Caco-2 (cell line): ENCODE measurements at regions of chr3 and their contacts with region 1.

Region 1: GRCh38 chr3:169668957-169669681 is 5.6 kb upstream of the MECOM start:
- DNase-seq: peak; percentile 67 to 80
- H3K4me3 ChIP-seq: peak overlapping the region; percentile 51
- H3K4me3 Mint-ChIP-seq: peak overlapping the region; percentile 74
- H3K27ac Mint-ChIP-seq: no peak overlapping the region
- H3K4me1 ChIP-seq: no peaks in the 10 kb centered on the region
- H3K4me1 Mint-ChIP-seq: peaks cover 7% of the 10 kb centered on the region
- H3K27me3 ChIP-seq: peaks cover 1% of the 10 kb centered on the region
- H3K27me3 Mint-ChIP-seq: peaks cover 22% of the 10 kb centered on the region
- CTCF ChIP-seq: peak; percentile 77 to 91

Region 2: GRCh38 chr3:168952551-168952950 is 716.6 kb before region 1 on chr3:
- CTCF ChIA-PET with region 1: no interaction called
- POLR2A ChIA-PET with region 1: no interaction called
- intact Hi-C with region 1: loop called (anchors 10 kb)
- DNase-seq: no peak
- H3K4me3 ChIP-seq: no peak overlapping the region
- H3K4me3 Mint-ChIP-seq: no peak overlapping the region
- H3K27ac Mint-ChIP-seq: no peak overlapping the region
- H3K4me1 ChIP-seq: peaks cover 14% of the 10 kb centered on the region
- H3K4me1 Mint-ChIP-seq: peaks cover 8% of the 10 kb centered on the region
- H3K27me3 ChIP-seq: no peaks in the 10 kb centered on the region
- H3K27me3 Mint-ChIP-seq: no peaks in the 10 kb centered on the region
- CTCF ChIP-seq: no peak

Region 3: DNA sequence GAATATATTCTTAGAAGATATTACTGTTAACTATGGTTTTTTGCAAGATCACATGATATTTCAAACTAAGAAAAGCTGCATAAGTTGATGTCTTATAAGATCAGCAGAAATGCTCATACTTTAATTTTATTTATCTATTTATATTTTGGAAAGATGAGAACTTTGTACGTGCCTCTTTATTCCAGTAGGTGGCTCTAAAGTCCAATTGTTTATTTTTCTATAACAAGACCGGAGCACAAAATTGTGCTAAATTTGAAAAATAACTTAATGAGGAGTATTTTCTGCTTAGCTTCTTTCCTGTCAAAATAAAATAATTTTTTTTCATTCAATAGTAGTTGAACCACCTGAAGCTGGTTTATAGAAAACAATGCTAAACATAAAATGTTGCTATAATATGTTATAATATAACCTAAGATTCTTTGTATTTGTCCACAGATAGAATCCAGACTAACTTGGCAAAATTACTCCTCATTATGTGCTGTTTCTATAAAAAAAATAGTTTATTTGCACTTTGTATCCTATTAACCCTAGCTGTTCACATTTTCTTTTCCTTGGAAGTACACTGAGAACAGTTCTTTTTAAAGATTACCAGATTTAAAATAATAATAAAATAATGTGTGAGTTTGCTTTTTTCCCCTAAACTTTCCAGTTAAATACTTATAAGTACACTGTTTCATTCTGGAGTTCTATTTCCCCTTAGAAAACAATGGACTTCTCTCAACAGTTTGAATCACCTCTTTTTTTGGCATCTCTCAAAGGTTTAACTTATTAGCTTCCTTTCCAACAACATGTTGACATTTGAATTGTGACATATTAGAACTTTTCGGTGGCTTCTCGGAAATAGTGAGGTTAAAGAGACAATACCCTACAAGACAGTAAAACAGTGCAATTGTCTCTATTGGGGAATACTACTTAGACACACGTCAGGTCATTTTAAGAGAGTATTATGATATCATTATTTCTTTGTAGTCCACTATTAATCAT is 535.6 kb before region 1 on chr3:
- CTCF ChIA-PET with region 1: interaction called, 3 read pairs
- POLR2A ChIA-PET with region 1: no interaction called
- intact Hi-C with region 1: loop called (anchors 1 kb)
- DNase-seq: no peak
- H3K4me3 ChIP-seq: no peak overlapping the region
- H3K4me3 Mint-ChIP-seq: no peak overlapping the region
- H3K27ac Mint-ChIP-seq: no peak overlapping the region
- H3K4me1 ChIP-seq: peaks cover 4% of the 10 kb centered on the region; the same call in 1 of the 2 replicates
- H3K4me1 Mint-ChIP-seq: no peaks in the 10 kb centered on the region
- H3K27me3 ChIP-seq: no peaks in the 10 kb centered on the region
- H3K27me3 Mint-ChIP-seq: no peaks in the 10 kb centered on the region
- CTCF ChIP-seq: peak; percentile 8 to 24

Region 4: DNA sequence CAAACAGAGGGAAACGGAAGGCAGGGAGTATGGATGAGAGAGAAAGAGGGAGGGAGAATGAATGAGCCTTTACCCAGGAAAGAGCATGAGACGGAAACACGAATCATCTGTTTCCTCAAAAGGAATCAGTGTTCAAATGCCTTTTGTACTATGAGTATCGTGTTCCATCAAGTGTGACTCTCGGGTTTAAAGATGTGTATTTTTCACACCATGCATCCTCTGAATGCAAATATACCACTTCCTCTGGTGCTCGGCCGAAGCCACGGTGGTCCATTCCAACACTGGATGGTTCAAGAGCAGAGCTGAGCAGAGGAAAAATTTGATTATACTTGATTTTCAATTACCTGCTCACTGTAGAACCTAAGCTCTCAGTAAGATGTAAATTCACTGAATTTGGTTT is 510.7 kb before region 1 on chr3:
- CTCF ChIA-PET with region 1: no interaction called
- POLR2A ChIA-PET with region 1: no interaction called
- intact Hi-C with region 1: no loop called
- DNase-seq: no peak
- H3K4me3 ChIP-seq: no peak overlapping the region
- H3K4me3 Mint-ChIP-seq: no peak overlapping the region
- H3K27ac Mint-ChIP-seq: no peak overlapping the region
- H3K4me1 ChIP-seq: no peaks in the 10 kb centered on the region
- H3K4me1 Mint-ChIP-seq: no peaks in the 10 kb centered on the region
- H3K27me3 ChIP-seq: no peaks in the 10 kb centered on the region
- H3K27me3 Mint-ChIP-seq: no peaks in the 10 kb centered on the region
- CTCF ChIP-seq: no peak

Region 5: GRCh38 chr3:169286214-169286613 is 382.9 kb before region 1 on chr3:
- CTCF ChIA-PET with region 1: no interaction called
- POLR2A ChIA-PET with region 1: no interaction called
- intact Hi-C with region 1: loop called (anchors 5 kb)
- DNase-seq: no peak
- H3K4me3 ChIP-seq: no peak overlapping the region
- H3K4me3 Mint-ChIP-seq: no peak overlapping the region
- H3K27ac Mint-ChIP-seq: no peak overlapping the region
- H3K4me1 ChIP-seq: peaks cover 24% of the 10 kb centered on the region
- H3K4me1 Mint-ChIP-seq: peaks cover 26% of the 10 kb centered on the region
- H3K27me3 ChIP-seq: no peaks in the 10 kb centered on the region
- H3K27me3 Mint-ChIP-seq: no peaks in the 10 kb centered on the region
- CTCF ChIP-seq: no peak

Region 6: GRCh38 chr3:169526246-169526645 is 142.9 kb before region 1 on chr3:
- CTCF ChIA-PET with region 1: no interaction called
- POLR2A ChIA-PET with region 1: no interaction called
- intact Hi-C with region 1: no loop called
- DNase-seq: no peak
- H3K4me3 ChIP-seq: no peak overlapping the region
- H3K4me3 Mint-ChIP-seq: no peak overlapping the region
- H3K27ac Mint-ChIP-seq: no peak overlapping the region
- H3K4me1 ChIP-seq: no peaks in the 10 kb centered on the region
- H3K4me1 Mint-ChIP-seq: no peaks in the 10 kb centered on the region
- H3K27me3 ChIP-seq: no peaks in the 10 kb centered on the region
- H3K27me3 Mint-ChIP-seq: no peaks in the 10 kb centered on the region
- CTCF ChIP-seq: no peak

Region 7: DNA sequence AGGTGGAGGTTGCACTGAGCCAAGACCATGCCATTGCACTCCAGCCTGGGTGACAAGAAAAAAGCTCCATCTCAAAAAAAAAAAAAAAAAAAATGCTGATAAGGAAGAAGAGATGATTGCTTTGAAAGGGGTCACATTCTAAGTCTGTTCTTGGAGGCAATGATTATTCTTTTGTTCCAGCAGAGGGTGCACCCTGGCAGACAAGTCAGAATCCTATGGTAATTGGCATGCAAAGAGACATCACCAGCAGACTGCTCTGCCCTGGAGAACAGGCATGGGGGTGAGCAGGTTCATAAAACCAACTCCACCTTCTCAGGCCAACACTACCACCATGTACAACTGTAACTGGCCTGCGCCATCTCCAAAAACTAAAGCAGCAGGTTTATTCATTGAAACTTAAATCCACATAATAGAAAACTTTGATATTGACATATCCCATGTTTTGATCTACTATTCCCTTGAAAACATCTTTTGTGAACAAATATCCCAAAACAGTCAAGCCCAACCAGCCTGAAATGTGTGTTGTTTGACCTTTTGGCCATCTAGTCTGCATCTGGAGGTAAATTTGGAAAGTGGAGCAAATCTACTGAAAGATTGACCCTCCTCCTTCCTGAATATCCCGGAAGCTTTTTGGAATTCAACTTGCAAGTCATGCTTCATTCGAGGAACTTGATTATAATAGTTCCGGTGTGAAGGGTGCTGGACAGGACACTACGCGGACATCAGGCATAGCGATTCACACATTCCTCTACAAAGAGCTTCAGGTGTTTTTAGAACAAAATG is 105.9 kb before region 1 on chr3:
- CTCF ChIA-PET with region 1: interaction called, 4 read pairs
- POLR2A ChIA-PET with region 1: no interaction called
- intact Hi-C with region 1: loop called (anchors 2 kb)
- DNase-seq: peak in 1 of 2 experiments; percentile 4
- H3K4me3 ChIP-seq: no peak overlapping the region
- H3K4me3 Mint-ChIP-seq: no peak overlapping the region
- H3K27ac Mint-ChIP-seq: no peak overlapping the region
- H3K4me1 ChIP-seq: no peaks in the 10 kb centered on the region
- H3K4me1 Mint-ChIP-seq: no peaks in the 10 kb centered on the region
- H3K27me3 ChIP-seq: no peaks in the 10 kb centered on the region
- H3K27me3 Mint-ChIP-seq: no peaks in the 10 kb centered on the region
- CTCF ChIP-seq: peak in 1 of 2 experiments; percentile 1

Region 8: DNA sequence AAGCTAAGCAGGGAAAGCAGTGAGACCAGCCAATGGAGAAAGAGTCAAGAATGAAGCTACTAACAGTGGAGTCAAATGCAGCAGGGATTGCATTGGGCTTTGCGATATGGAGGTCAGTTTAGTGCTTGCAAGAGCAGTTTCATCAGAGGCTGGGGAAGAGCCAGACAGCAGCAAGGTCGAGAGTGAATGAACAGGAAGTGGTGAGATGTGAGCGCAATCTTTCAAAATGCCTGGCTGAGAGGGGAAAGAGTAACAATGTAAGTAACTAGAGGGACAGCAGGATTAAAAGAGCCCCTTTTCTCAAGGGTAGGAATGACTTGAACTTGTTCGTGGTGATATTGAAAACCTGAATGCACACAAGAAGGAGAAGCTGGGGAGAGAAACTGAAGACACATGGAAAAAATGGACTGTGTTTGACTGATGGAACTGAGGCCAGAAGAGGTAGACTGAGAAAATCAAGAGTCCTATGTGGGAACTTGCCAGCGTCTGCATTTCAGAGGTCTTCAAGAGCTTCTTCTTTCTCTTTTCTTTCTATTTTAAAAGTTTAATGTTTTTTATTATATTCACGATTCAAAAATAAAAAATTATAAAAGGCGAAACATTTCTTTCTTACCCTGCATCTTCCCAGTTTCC is 338.0 kb after region 1 on chr3:
- CTCF ChIA-PET with region 1: no interaction called
- POLR2A ChIA-PET with region 1: no interaction called
- intact Hi-C with region 1: no loop called
- DNase-seq: no peak
- H3K4me3 ChIP-seq: no peak overlapping the region
- H3K4me3 Mint-ChIP-seq: no peak overlapping the region
- H3K27ac Mint-ChIP-seq: no peak overlapping the region
- H3K4me1 ChIP-seq: no peaks in the 10 kb centered on the region
- H3K4me1 Mint-ChIP-seq: no peaks in the 10 kb centered on the region
- H3K27me3 ChIP-seq: no peaks in the 10 kb centered on the region
- H3K27me3 Mint-ChIP-seq: peaks cover 2% of the 10 kb centered on the region
- CTCF ChIP-seq: no peak